Endothelial cell of umbilical vein (primary cell): ENCODE measurements at regions of chr6 and their contacts with region 1.

Region 1: DNA sequence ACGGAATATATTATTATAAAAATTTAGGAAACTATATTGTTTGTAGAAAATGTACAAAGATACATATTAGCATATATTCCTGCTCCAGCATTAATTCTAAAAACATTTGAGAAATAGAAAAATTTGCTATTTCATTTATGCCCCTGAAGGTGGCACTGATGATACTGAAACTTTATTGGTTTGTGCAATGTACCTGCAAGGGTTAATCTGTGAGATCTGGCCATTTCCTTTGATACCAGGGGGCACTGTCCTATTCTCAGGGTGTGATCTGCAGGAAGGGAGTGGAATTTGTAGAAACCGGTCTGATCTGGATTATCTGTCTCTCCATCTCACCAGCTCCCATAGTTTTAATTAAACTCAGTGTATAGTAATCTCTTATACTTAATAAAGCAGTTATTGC is 625.1 kb upstream of the IMPG1 start:
- DNase-seq: peak; percentile 64
- H3K4me3 ChIP-seq: no peak overlapping the region
- H3K27ac ChIP-seq: no peak overlapping the region
- H3K4me1 ChIP-seq: peaks cover 9% of the 10 kb centered on the region
- H3K27me3 ChIP-seq: no peaks in the 10 kb centered on the region
- CTCF ChIP-seq: peak; percentile 18 to 30
- POLR2A ChIP-seq: no peak

Region 2: GRCh38 chr6:76351275-76351674 is 346.3 kb before region 1 on chr6:
- CTCF ChIA-PET with region 1: no interaction called
- POLR2A ChIA-PET with region 1: no interaction called
- dilution Hi-C with region 1: no loop called
- intact Hi-C with region 1: no loop called
- DNase-seq: no peak
- H3K4me3 ChIP-seq: no peak overlapping the region
- H3K27ac ChIP-seq: no peak overlapping the region
- H3K4me1 ChIP-seq: no peaks in the 10 kb centered on the region
- H3K27me3 ChIP-seq: no peaks in the 10 kb centered on the region
- CTCF ChIP-seq: peak in 1 of 2 donors; percentile 14
- POLR2A ChIP-seq: no peak

Region 3: GRCh38 chr6:76578746-76579145 is 118.8 kb before region 1 on chr6:
- CTCF ChIA-PET with region 1: no interaction called
- POLR2A ChIA-PET with region 1: no interaction called
- dilution Hi-C with region 1: no loop called
- intact Hi-C with region 1: no loop called
- DNase-seq: no peak
- H3K4me3 ChIP-seq: no peak overlapping the region
- H3K27ac ChIP-seq: no peak overlapping the region
- H3K4me1 ChIP-seq: no peaks in the 10 kb centered on the region
- H3K27me3 ChIP-seq: no peaks in the 10 kb centered on the region
- CTCF ChIP-seq: no peak
- POLR2A ChIP-seq: no peak

Region 4: DNA sequence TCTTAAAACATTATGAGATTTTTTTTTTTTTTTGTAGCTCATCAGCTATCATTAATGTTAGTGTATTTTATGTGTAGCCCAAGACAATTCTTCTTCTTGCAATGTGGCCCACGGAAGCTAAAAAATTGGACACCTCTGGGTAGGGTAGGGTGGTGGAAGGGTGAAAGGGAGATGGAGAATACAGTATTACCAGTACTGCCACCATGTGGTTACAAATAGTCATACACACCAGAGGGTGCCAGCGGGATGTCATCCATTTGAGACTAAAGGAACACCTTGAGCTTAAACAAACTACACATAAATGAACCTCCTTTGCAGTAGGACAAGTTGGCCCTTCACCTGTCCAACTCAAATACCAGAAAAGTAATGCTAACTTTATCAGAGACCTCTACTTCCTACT is 163.8 kb after region 1 on chr6:
- CTCF ChIA-PET with region 1: no interaction called
- POLR2A ChIA-PET with region 1: no interaction called
- dilution Hi-C with region 1: no loop called
- intact Hi-C with region 1: loop called (anchors 10 kb)
- DNase-seq: peak; percentile 9
- H3K4me3 ChIP-seq: no peak overlapping the region
- H3K27ac ChIP-seq: no peak overlapping the region
- H3K4me1 ChIP-seq: no peaks in the 10 kb centered on the region
- H3K27me3 ChIP-seq: no peaks in the 10 kb centered on the region
- CTCF ChIP-seq: peak; percentile 4 to 11
- POLR2A ChIP-seq: no peak

Region 5: DNA sequence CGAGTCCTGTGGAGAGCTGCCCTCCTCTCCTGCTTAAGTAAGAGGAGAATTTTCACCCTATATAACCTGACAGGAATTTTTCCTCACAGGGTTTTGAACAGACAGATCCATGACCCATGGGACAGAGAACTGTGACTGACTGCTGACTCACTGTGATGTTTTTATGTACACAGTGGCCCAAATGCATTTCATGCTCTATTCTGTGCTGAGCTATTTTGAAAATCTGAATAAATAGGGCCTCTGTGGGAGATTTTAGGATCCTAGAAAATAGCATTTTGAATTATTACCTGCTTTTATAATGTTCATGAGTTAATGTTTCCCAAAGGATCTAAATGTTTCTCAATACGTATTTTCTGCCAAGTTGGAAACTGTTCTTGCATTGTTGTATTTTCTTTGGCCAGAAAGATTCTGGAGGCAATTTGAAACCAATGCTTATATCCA is 188.3 kb after region 1 on chr6:
- CTCF ChIA-PET with region 1: no interaction called
- POLR2A ChIA-PET with region 1: no interaction called
- dilution Hi-C with region 1: no loop called
- intact Hi-C with region 1: no loop called
- DNase-seq: no peak
- H3K4me3 ChIP-seq: no peak overlapping the region
- H3K27ac ChIP-seq: no peak overlapping the region
- H3K4me1 ChIP-seq: no peaks in the 10 kb centered on the region
- H3K27me3 ChIP-seq: no peaks in the 10 kb centered on the region
- CTCF ChIP-seq: no peak
- POLR2A ChIP-seq: no peak

Region 6: DNA sequence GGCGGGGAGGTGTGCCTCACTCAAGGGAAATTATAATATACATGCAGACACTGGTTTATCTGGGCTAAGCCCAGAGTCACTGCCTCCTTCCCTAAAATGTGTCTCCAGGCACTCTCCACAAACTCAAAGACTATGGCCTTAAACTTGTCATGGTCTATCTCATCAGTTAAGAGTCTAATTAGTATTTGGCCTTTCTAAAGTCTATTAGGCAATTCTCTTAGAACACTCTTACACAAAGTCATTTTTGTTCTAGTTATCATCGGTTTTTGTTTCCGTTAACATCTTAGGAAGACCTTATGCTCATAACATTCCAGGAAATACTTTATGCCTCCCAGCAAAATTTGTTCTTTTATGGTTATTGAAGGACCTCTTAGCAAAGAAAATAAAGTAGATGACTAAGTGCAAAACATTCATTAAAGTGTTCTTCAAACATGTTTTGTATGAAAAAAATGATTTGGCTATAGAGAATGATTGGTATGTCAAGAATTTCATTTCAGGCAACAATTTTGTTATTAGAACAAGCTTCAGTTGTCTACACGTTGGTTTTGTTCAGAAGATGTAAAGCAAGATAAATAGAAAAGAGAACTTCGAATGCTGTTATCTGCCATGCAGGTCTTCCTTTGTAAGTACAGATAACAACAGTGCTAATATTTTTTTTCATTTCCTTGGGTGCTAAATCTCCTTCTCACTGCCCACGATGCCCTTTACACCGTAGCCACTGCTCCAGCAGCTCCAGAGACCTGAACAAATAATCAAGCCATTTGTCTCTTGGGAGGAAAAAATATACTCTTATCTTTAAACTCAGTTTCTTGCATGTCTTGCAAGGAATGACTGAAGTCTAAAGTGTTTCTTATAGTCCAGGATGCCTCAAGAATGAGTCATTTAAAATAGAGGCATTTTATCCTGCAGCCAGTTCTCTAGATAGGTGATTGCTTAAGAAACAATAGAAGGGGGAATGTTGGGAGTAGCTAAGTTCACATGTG is 595.3 kb after region 1 on chr6:
- CTCF ChIA-PET with region 1: interaction called, 3 read pairs
- POLR2A ChIA-PET with region 1: no interaction called
- dilution Hi-C with region 1: no loop called
- intact Hi-C with region 1: loop called (anchors 2 kb)
- DNase-seq: peak; percentile 97
- H3K4me3 ChIP-seq: no peak overlapping the region
- H3K27ac ChIP-seq: peak overlapping the region; percentile 90
- H3K4me1 ChIP-seq: peaks cover 61% of the 10 kb centered on the region
- H3K27me3 ChIP-seq: no peaks in the 10 kb centered on the region
- CTCF ChIP-seq: no peak
- POLR2A ChIP-seq: no peak